Left ventricle myocardium inferior (tissue), 1 donor: ENCODE measurements at regions of chr7 and their contacts with region 1.

Region 1: DNA sequence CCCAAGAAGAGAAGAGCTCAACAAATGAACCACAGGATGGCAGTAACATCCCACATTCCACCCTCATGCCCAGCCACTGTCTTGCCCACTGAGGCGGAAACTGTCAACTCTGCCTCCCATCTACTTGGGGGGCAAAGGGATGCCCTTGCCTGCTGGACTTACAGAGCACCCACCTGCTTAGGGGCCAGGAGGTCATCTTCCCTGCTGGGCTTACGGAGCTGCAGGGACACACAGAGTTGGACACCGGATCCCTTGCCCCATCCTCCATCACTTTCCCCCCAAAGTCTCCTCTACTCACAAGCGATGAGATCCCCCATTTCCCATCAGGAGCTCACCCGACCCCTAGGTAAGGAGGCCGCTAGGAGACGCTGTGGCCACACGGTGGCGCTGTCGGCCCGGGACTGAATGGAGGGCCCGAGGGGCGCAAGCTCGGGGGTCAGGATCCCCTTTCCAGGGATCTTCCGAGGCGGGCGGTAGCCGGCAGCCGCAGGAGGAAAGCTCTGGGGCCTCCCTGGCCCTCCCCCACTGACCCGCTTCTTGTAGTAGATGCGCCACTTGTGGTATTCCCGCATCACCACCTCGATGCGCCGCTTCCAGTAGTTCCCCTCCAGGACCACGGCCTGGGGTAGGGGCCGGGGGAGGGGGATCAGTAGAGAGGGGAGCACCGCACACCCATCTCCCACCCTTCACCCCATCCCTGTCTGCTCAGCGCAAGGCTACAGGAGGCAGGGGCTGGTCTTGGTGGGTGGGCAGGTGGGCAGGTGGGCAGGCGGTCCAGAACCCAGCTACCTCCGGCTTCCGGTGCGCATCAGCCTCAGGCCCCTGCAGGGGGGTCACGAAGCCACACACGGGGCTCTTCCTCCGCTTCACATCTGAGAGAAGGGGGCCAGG is 17.3 kb downstream of the MLXIPL start:
- DNase-seq: peak; percentile 33
- H3K4me3 ChIP-seq: no peak overlapping the region
- H3K27ac ChIP-seq: no peak overlapping the region
- H3K4me1 ChIP-seq: peaks cover 4% of the 10 kb centered on the region
- H3K27me3 ChIP-seq: peaks cover 63% of the 10 kb centered on the region
- CTCF ChIP-seq: peak; percentile 92

Region 2: GRCh38 chr7:73726083-73726466 is 119.0 kb after region 1 on chr7:
- intact Hi-C with region 1: loop called (anchors 5 kb)
- DNase-seq: no peak
- H3K4me3 ChIP-seq: no peak overlapping the region
- H3K27ac ChIP-seq: no peak overlapping the region
- H3K4me1 ChIP-seq: peaks cover 10% of the 10 kb centered on the region
- H3K27me3 ChIP-seq: peaks cover 29% of the 10 kb centered on the region
- CTCF ChIP-seq: no peak

Region 3: GRCh38 chr7:73842247-73842895 is 235.3 kb after region 1 on chr7 and contains the start of gene METTL27:
- intact Hi-C with region 1: no loop called
- DNase-seq: peak; percentile 93
- H3K4me3 ChIP-seq: peak within 1 kb of the TSS; percentile 73
- H3K27ac ChIP-seq: peak within 1 kb of the TSS; percentile 50
- H3K4me1 ChIP-seq: peaks cover 12% of the 10 kb centered on the region
- H3K27me3 ChIP-seq: no peaks in the 10 kb centered on the region
- CTCF ChIP-seq: no peak
- total RNA-seq, gene METTL27: 0.44 TPM

Region 4: DNA sequence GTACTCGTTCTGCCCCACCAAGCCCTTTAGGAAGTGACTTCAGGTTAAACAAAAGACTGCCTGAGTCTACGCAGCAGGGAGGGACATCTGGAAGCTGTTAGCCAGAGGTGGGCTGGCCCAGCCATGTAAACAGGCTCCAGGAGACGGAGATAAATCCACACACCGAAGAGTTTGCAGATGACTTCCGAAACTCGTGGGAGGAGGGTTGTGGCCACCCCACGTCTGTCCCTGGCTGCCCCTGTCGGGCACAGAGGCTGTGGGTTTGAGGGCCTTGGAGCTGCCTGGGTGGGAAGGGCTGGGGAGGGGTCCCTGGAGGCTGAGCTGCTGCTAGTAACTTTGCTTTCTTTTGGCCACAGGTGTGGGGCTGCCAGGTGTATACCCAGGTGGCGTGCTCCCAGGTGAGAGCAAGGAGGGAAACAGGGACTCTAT is 436.5 kb after region 1 on chr7:
- intact Hi-C with region 1: no loop called
- DNase-seq: no peak
- H3K4me3 ChIP-seq: no peak overlapping the region
- H3K27ac ChIP-seq: no peak overlapping the region
- H3K4me1 ChIP-seq: peaks cover 29% of the 10 kb centered on the region
- H3K27me3 ChIP-seq: peaks cover 24% of the 10 kb centered on the region
- CTCF ChIP-seq: no peak